ENCODE measurements at regions of chr1 and their contacts with region 1.

Region 1: DNA sequence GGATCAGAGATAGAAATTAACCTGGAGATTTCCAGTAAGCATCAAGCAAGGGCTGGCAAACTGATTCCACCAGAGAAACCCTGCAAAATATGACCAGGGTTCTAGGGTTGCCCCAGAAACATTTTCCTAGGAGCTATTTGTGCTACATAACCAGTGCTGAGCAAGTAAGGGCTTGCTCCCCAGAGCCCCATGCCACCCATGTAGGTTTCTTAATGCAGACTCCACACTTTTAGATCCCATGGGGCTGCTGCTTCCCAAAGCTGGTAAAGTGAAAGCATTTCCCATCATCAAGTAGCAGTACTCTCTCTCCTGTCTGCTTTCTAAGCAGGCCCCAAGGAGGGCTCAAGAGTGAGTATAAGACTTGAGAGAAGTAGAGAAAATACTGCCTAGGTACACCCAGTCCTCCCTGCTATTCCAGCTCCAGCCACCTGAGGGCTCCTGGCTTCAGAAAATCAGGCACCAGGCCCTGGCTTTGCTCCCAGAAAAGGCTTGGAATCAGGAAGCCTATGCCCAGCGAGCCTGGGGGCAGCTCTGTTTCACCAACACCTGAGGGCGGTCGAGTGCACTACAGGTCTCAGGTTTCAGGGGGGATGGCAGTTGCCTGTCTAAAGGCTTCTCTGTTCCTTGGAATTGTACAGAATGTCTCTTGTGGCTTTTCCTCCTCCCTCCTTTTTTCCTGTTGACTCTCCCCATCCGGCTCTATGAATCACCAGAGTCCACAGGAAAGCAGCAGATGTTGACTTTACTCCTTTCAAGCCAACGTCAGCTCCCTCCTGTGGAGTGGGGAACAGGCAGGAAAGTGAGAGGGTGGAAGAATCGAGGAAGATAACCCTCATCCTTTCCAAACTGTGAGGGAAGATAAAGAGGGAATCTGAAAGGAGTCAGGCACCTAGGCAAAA is 6.2 kb upstream of the ANKRD35 start:
- DNase-seq: peak; percentile 100
- H3K4me3 Mint-ChIP-seq: peak overlapping the region; percentile 57
- H3K27ac Mint-ChIP-seq: peak overlapping the region; percentile 95
- H3K4me1 Mint-ChIP-seq: peaks cover 36% of the 10 kb centered on the region
- H3K27me3 Mint-ChIP-seq: no peaks in the 10 kb centered on the region
- CTCF ChIP-seq: peak; percentile 98

Region 2: GRCh38 chr1:145740266-145740665 is 151.6 kb before region 1 on chr1:
- CTCF ChIA-PET with region 1: no interaction called
- POLR2A ChIA-PET with region 1: no interaction called
- intact Hi-C with region 1: no loop called
- DNase-seq: no peak
- H3K4me3 Mint-ChIP-seq: no peak overlapping the region
- H3K27ac Mint-ChIP-seq: no peak overlapping the region
- H3K4me1 Mint-ChIP-seq: no peaks in the 10 kb centered on the region
- H3K27me3 Mint-ChIP-seq: no peaks in the 10 kb centered on the region
- CTCF ChIP-seq: no peak

Region 3: DNA sequence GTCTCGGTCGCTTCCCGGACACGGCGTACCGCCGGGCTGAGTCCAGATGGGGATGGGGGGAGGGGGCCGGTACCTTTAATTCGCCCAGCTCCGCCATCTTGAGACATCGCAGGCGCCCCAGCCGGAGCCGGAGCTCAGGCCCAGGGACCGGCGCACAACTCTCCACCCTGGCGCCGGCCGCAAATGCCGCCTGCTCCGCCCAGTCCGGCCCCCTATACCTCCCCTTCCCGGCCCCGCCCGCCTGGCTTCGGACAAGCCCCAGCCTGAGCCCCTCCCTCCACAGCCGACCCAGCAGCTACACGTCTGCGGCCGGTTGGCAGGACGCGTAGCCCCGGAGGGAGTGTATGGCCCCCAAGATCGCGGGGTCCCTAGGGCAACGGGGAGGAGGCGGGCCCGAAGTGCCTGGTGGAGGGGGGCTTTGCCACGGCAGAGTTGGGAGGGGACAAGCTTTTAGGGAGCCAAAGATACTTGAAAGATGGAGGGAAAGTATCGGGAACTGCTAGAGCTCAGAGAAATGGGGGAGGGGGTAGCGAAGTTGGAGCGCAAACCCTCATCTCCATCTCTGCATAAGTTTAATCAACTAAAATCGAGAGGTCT is 32.8 kb before region 1 on chr1 and contains the start of gene PIAS3:
- CTCF ChIA-PET with region 1: interaction called, 73 read pairs
- POLR2A ChIA-PET with region 1: interaction called, 179 read pairs
- intact Hi-C with region 1: no loop called
- DNase-seq: peak; percentile 97
- H3K4me3 Mint-ChIP-seq: peak within 1 kb of the TSS; percentile 99
- H3K27ac Mint-ChIP-seq: peak within 1 kb of the TSS; percentile 86
- H3K4me1 Mint-ChIP-seq: peaks cover 21% of the 10 kb centered on the region
- H3K27me3 Mint-ChIP-seq: no peaks in the 10 kb centered on the region
- CTCF ChIP-seq: no peak
- total RNA-seq, gene PIAS3: 34.3 and 36.9 TPM in 2 replicates

Region 4: GRCh38 chr1:145906954-145907753 is 15.3 kb after region 1 on chr1:
- CTCF ChIA-PET with region 1: interaction called, 617 read pairs
- POLR2A ChIA-PET with region 1: interaction called, 284 read pairs
- intact Hi-C with region 1: loop called (anchors 1 kb)
- DNase-seq: no peak
- H3K4me3 Mint-ChIP-seq: no peak overlapping the region
- H3K27ac Mint-ChIP-seq: peak overlapping the region; percentile 57
- H3K4me1 Mint-ChIP-seq: peaks cover 24% of the 10 kb centered on the region
- H3K27me3 Mint-ChIP-seq: no peaks in the 10 kb centered on the region
- CTCF ChIP-seq: no peak

Region 5: GRCh38 chr1:145957443-145958319 is 65.8 kb after region 1 on chr1 and contains the start of gene LIX1L:
- CTCF ChIA-PET with region 1: interaction called, 27 read pairs
- POLR2A ChIA-PET with region 1: interaction called, 77 read pairs
- intact Hi-C with region 1: loop called (anchors 1 kb)
- DNase-seq: peak; percentile 100
- H3K4me3 Mint-ChIP-seq: peak within 1 kb of the TSS; percentile 80
- H3K27ac Mint-ChIP-seq: peak within 1 kb of the TSS; percentile 80
- H3K4me1 Mint-ChIP-seq: peaks cover 65% of the 10 kb centered on the region
- H3K27me3 Mint-ChIP-seq: no peaks in the 10 kb centered on the region
- CTCF ChIP-seq: no peak
- total RNA-seq, gene LIX1L: 40.1 and 42.1 TPM in 2 replicates

Region 6: DNA sequence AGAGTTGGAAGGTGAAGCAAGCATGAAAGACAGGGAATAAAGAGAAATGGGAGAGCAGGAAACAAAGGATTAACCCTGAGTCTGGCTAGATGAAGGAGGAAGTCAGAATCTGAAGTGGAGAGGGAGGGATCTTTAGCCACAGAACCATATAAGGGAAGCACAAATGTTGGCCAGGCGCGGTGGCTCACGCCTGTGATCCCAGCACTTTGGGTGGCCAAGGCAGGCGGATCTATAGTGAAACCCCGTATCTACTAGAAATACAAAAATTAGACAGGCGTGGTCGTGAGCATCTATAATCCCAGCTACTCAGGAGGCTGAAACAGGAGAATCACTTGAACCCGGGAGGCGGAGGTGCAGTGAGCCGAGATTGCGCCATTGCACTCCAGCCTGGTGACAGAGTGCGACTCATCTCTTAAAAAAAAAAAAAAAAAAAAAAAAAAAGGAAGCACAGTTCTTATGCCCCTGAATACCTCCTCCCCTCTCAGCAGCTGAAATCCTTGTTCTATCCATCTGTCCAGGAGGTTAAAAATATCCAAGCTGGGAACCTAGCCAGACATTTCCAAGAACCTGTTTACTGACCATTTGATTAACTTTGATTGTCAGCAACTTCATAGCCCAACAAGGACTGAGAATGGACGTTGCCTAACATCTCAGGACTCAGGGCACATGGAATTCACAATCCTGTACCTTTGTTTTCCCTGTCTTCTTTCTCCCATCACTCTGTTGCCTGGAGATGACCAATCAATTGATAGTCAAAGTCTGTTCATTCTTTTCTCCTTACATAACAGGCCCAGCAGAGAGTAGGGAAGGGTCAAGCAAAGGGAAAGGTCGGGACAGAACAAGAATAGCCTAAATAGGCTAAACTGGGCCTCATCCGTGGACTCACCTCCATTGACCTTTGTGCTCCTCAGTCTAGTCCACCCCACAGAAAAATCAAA is 93.9 kb after region 1 on chr1:
- CTCF ChIA-PET with region 1: interaction called, 58 read pairs
- POLR2A ChIA-PET with region 1: interaction called, 30 read pairs
- intact Hi-C with region 1: no loop called
- DNase-seq: peak; percentile 88
- H3K4me3 Mint-ChIP-seq: peak overlapping the region; percentile 32
- H3K27ac Mint-ChIP-seq: peak overlapping the region; percentile 73
- H3K4me1 Mint-ChIP-seq: peaks cover 31% of the 10 kb centered on the region
- H3K27me3 Mint-ChIP-seq: no peaks in the 10 kb centered on the region
- CTCF ChIP-seq: no peak

Region 7: DNA sequence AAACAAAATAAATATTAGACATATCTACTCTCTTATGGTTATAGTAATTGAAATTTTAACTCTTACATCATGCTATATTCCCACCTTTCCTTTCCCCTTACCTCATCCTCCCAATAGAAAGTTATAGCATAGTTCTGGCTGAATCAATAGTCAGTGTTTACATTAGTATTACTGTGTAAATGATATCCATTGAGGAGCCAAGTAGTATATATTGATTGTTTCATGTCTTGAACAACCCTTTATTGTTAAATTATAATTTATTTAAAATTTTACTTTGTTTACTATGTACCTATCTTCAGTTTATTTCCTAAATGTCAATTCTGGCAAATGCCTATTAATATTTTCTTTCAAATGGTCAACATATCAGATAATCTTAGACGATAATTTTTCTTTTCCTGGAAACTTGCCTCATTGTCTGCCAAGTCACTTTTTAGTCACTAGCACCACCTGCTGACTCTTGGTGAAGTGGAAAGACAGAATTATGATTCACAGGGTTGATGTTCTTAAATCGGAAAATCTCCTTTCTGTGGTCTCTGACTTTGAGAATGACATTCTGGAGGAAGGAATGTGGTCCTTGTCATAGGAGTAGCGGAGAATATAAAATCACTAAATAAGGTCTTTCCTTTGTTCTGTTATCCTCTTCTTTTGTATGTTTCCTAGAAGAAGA is 121.0 kb after region 1 on chr1:
- CTCF ChIA-PET with region 1: interaction called, 78 read pairs
- POLR2A ChIA-PET with region 1: interaction called, 30 read pairs
- intact Hi-C with region 1: loop called (anchors 1 kb)
- DNase-seq: peak; percentile 87
- H3K4me3 Mint-ChIP-seq: no peak overlapping the region
- H3K27ac Mint-ChIP-seq: no peak overlapping the region
- H3K4me1 Mint-ChIP-seq: peaks cover 9% of the 10 kb centered on the region
- H3K27me3 Mint-ChIP-seq: no peaks in the 10 kb centered on the region
- CTCF ChIP-seq: peak; percentile 89